Cardiac septum (tissue), 1 donor: ENCODE measurements at regions of chr10 and their contacts with region 1.

Region 1: DNA sequence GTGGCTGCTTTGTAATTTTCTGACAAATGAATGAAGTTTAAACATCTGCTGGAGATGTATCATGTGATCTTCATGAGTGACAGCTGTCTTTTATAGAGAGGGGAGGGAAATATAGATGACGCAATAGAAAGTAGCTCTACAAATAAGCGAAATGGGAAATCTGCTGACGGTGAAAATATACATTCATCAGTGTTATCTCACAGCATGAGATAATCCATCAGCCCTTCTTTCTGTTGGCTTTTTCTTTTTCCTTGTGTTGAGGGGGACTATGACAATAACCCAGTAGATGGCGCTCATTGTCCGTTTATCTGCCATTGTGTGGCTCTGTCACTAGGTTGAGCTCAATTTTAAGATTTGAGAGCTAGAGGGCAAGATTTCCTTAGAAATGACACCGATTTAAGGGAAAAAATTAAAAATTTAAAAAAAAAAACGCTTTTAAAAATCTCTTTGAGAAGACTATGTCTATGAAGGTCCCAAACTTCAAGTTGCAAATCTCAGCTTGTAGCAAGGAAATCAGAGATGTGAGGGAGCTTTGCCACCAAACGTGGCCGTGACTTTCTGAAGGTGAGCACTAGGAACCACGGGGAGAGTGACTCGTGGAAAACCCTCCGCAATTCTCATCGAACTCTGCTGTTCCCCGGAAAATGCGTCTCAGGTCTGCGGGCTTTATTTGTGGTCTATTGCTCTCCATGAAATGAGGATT is 114.6 kb upstream of the SFMBT2 start:
- DNase-seq: no peak

Region 2: DNA sequence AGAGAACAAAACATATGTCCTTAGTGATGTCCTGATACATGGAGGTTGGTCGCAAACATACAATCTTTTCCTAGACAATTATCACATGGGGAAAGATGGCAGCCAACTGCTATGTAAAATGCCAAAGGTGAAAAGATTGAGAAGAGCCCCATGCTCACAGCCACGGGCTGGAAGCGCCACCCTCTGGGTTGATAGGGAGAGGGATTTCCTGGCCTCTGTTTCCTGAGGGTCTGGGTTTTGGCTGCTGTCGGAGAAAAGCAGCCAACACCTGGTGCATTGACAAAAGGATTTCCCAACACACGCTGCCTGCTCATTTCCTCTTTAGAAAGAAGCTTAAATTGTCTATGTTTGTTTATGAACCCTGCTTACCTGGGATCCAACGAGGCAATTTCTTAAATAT is 97.5 kb after region 1 on chr10:
- intact Hi-C with region 1: loop called (anchors 5 kb)
- DNase-seq: no peak

Region 3: DNA sequence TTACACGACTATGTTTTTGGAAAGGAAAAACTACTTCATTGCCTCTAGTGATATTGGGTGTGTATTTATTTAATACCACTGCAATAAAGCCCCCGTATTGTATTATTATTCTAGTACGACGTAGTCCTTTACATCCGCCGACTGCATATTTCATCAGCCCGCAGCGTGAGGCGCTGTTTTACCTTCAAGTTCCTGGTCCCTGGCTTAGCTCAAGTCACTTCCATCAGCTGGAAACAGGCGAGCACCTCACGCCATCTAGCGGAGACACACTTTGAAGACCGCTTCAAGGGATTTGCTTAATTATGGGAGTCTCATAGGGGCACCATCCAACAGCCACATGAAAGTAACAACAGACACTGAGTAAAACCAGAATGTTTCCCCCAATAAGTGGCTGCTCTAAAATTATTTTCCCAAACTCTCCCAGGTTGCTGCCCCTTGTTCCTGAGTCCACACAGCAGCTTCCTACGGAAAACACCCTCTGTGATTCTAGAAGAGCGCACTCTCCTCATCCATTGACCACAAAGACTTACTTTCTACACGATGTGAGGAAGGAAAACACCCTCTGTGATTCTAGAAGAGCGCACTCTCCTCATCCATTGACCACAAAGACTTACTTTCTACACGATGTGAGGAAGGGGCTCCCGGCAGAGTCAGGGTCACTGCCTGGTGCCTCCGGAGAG is 161.9 kb after region 1 on chr10:
- intact Hi-C with region 1: loop called (anchors 1 kb)
- DNase-seq: peak; percentile 85

Region 4: GRCh38 chr10:9302120-9302746 is 1776.8 kb after region 1 on chr10:
- intact Hi-C with region 1: loop called (anchors 10 kb)
- DNase-seq: no peak